Activated B cell treated with CpG ODN at 0.5 μM for 24 hours (primary cell): ENCODE measurements at regions of chr4 and their contacts with region 1.

Region 1: DNA sequence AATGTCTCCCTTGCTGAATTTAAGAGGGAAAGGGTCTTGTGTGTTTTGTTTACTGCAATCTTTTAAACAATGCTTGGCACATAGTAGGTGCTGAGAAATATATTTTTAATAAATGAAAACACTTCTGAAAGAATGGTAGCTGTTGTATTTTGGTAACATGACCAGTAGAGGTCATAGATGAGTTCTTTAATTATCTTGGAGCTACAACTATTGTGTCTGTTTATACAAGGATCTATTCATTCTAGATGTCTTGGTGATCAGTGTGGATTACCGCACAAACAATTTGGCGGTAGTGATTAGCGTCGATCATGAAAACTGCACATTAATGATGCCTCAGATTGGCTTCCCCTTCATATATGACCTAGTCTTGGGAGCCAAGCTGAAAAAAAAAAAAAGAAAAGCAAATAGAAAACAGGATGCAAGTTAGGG is 21.4 kb upstream of the SCRG1 start:
- DNase-seq: no peak
- ATAC-seq: no peak
- H3K4me3 Mint-ChIP-seq: no peak overlapping the region
- H3K27ac Mint-ChIP-seq: no peak overlapping the region
- H3K4me1 Mint-ChIP-seq: peaks cover 3% of the 10 kb centered on the region
- H3K27me3 Mint-ChIP-seq: no peaks in the 10 kb centered on the region
- CTCF ChIP-seq: no peak

Region 2: DNA sequence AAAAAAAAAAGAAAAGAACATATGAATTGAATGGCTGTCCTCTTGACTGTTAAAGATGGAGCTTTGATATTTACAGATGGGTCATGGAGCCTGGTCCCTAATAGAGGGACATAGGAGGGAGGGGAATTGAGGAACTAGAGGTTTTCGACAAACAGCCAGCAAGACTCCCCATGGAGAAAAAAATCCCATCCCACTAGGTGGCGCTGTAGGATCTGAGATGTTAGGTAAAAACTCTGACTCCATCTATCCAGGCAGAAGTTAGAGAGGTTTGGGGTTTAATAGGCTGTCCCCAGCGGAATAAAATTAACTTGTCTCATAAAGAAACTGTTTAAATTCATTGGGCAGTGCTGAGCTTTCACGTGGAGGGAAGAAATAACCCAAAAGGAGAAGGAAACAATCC is 132.0 kb before region 1 on chr4:
- CTCF ChIA-PET with region 1: no interaction called
- POLR2A ChIA-PET with region 1: no interaction called
- intact Hi-C with region 1: loop called (anchors 1 kb)
- DNase-seq: no peak
- ATAC-seq: peak; percentile 40
- H3K4me3 Mint-ChIP-seq: no peak overlapping the region
- H3K27ac Mint-ChIP-seq: no peak overlapping the region
- H3K4me1 Mint-ChIP-seq: peaks cover 4% of the 10 kb centered on the region
- H3K27me3 Mint-ChIP-seq: no peaks in the 10 kb centered on the region
- CTCF ChIP-seq: no peak

Region 3: GRCh38 chr4:173334085-173334772 is 86.1 kb before region 1 on chr4 and contains the start of gene HMGB2:
- CTCF ChIA-PET with region 1: interaction called, 3 read pairs
- POLR2A ChIA-PET with region 1: no interaction called
- intact Hi-C with region 1: loop called (anchors 1 kb)
- DNase-seq: peak; percentile 95
- ATAC-seq: peak; percentile 93
- H3K4me3 Mint-ChIP-seq: peak within 1 kb of the TSS; percentile 96
- H3K27ac Mint-ChIP-seq: peak within 1 kb of the TSS; percentile 98
- H3K4me1 Mint-ChIP-seq: peaks cover 25% of the 10 kb centered on the region
- H3K27me3 Mint-ChIP-seq: no peaks in the 10 kb centered on the region
- CTCF ChIP-seq: no peak
- total RNA-seq, gene HMGB2: 63.2 and 63.9 TPM in 2 replicates

Region 4: DNA sequence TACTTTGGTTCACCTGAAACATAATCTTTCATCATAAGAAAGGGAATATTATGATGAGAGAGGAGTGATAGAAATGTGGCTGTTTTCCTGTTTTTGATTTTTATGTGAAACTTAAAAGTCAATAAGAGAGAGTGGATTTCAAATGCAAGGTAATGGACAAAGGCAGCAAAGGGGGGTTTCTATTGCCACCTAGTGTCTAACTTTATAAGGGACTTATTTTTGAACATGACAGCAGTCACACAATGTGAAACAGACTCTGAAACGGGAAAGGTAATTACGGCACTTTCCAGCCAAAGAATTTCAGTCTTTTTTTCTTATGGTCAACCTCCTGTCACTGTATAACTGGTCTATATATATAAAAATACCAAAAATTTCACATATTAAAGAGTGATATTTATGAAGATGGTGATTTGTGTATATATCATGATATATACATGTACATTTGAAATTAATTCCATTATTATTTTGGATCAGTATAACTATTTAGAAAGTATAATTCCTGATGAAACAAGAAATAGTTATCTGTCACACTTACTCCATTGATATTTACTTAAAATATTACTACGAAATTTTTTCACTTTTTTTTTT is 736.0 kb after region 1 on chr4:
- CTCF ChIA-PET with region 1: no interaction called
- POLR2A ChIA-PET with region 1: no interaction called
- intact Hi-C with region 1: loop called (anchors 5 kb)
- DNase-seq: no peak
- ATAC-seq: no peak
- H3K4me3 Mint-ChIP-seq: no peak overlapping the region
- H3K27ac Mint-ChIP-seq: no peak overlapping the region
- H3K4me1 Mint-ChIP-seq: no peaks in the 10 kb centered on the region
- H3K27me3 Mint-ChIP-seq: peaks cover 11% of the 10 kb centered on the region
- CTCF ChIP-seq: no peak